Posterior vena cava (tissue), 2 donors: ENCODE measurements at regions of chr20 and their contacts with region 1.

Region 1: GRCh38 chr20:38165089-38165989 is at the start of gene TGM2:
- DNase-seq: peak; percentile 92
- total RNA-seq, gene TGM2: 442 to 500 TPM

Region 2: GRCh38 chr20:38057351-38057972 is 107.9 kb before region 1 on chr20:
- intact Hi-C with region 1: loop called in 1 of 2 experiments (anchors 5 kb)
- DNase-seq: peak; percentile 94

Region 3: DNA sequence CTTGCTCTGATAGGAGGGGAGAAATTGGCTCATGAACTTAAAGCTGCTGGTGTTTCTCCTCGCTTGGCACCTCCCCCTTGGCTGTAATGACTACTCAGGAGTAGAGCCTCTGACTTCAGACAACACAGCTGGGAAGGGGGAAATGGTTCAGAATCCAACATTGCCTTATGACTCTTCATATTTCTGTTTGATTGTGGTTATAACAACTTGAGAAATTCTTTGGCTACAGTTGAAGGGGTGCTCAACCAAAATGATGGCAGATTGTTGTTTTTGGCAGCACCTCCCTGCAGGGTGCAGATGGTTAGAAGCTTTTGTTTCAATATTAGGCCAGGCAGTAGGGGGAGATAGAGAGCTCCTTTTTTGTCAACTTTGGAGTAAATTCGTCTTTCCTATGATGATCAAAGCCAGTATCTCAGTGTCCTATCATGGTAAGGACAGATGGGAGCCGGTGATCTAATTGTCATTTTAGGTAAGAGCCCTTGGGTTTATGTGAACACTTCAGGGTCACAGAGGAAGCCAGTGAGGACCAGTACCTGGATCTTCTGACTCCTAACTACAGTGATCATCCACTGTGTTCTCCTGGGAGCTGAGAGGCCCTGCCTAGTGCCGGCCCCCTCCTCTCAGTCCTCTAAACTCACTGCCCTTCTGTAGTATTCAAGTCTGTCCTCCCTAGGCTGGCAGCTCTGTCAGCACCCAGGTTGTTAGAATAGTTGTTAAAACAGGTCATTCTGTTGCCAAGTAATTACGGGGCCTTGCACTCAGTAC is 91.8 kb before region 1 on chr20:
- intact Hi-C with region 1: loop called in 1 of 2 experiments (anchors 5 kb)
- DNase-seq: no peak

Region 4: DNA sequence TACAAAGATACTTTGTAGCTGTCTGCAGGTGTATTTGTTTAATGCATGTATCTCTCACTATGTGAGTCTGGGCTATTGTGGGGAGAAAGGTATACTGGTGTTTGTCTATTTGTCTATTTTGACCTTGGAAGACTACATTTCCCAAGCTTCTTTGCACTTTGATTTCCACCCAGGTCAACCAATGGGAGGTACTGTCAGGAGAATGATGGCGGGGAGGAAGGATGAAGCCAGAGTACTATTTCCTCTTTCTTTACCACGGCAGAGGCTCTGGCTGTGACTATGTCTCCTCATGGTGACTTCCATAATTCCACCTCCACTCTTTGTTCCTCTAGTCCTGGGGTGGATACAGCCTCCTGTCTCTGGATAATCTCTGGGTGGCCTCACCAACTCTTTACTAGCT is 204.1 kb after region 1 on chr20:
- intact Hi-C with region 1: no loop called
- DNase-seq: no peak